ENCODE measurements at regions of chr17 and their contacts with region 1.

Region 1: GRCh38 chr17:73156166-73156840 is 8.5 kb upstream of the SSTR2 start:
- DNase-seq: peak; percentile 87
- ATAC-seq: peak; percentile 94

Region 2: DNA sequence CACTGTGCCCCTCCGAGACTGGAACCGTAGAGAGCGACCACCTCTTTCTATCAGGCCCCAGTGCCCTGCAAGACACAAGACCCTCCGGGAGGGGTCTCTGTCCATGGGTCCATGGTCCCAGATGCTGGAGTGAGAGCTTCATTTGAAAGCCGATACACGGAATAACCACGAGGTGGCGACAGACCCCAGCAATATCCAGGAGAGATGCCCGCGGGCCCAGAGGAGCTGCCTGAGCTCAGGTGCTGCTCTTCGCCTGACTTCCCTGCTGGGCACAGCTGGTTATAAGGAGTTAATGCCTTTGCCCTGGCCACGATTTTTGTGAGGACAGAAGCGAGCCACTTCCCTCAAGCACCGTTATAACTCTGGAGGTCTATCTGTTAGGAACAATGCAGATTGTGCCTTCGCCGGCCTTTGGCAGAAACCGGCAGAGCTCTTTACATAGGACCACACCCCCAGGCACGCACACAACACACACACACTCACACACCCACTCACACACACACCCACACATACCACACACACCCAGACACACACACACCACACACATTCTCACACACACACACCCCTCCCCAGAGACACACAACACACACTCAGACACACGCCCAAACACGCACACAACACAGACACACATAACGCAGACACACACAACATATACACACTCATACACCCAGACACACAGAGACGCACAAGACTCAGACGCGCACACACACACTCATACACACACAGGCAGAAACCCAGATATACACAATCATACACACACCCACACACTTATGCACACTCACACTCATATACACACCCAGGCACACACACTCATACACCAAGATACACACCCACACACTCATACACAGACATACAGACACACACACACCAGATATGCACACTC is 599.1 kb before region 1 on chr17:
- intact Hi-C with region 1: loop called (anchors 10 kb)
- DNase-seq: no peak
- ATAC-seq: peak; percentile 53

Region 3: DNA sequence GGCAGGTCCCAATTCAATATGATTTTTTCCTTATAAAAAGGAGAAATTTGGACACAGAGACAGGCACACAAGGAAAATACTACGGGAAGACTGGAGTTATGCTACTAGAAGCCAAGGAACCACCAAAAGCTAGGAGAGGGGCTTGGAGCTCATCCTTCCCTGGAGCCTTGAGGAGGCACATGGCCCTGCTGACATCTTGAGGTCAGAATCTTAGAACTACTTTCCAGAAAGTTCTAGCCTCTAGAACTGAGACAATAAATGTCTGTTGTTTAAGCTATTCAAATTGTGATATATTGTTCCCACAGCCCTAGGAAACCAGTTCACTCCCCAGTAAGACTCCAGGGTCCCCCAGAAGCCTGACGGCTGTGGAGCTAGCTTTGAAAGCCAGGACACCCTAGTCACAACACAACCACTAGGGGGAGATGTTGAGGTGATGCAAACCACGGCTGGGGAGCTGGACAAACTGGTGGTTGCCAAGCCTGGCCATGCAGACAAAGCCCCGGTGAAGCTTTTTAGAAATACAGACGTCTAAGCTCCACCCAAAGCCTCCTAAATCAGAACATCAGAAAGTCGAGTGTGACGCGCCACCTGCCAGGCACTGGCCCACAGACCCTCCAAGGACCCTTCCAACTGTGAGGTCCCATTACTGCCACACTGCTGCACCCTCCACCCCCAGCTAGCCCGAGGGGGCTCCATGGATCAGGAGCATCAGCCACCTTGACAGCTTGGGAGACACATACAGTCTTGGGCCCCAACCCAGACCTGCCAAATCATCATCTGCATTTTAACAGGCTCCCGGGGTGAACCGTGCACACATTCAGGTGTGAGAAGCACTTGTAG is 170.2 kb before region 1 on chr17:
- intact Hi-C with region 1: loop called (anchors 1 kb)
- DNase-seq: no peak
- ATAC-seq: peak; percentile 85

Region 4: GRCh38 chr17:73092523-73093135 is 63.7 kb before region 1 on chr17 and contains the start of gene SLC39A11:
- intact Hi-C with region 1: loop called (anchors 10 kb)
- DNase-seq: peak; percentile 95
- ATAC-seq: peak; percentile 98
- total RNA-seq, gene SLC39A11: 6.9 TPM

Measured in Right ventricle myocardium inferior (tissue), 1 donor.